CD4-positive, alpha-beta memory T cell (primary cell): ENCODE measurements at regions of chr3 and their contacts with region 1.

Region 1: DNA sequence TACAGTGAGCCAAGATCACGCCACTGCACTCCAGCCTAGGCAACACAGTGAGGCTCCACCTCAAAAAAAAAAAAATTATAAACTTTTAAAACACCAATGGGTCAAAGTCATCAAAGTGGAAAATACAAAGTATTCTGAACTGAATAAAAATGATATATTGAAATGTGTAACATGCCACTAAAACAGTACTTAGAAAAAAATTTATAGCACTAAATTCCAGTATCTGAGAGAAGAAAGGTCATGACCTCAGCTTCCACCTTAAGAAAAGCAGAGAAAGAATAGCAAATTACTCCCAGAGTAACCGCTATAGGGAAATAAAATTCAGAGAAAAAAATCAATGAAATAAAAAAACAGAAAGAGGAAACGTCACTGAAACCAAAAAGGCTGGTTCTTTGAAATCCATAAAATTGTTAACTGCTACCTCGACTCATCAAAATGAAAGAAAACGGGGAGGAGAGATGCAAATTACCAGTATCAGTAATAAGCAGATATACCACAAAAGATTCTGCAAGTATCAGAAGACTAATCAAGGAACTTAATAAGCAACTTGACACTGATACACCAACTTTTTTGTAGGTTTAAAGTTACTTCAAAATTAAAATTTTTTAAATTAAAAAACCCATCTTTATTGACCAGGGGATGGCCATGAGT is 20.8 kb downstream of the ATP13A3 start:
- DNase-seq: no peak
- H3K4me3 ChIP-seq: no peak overlapping the region
- H3K4me3 Mint-ChIP-seq: peak overlapping the region in 4 of 8 donors; percentile 28 to 62 (median 41)
- H3K27ac ChIP-seq: no peak overlapping the region
- H3K27ac Mint-ChIP-seq: peak overlapping the region in 1 of 7 donors; percentile 22
- H3K4me1 ChIP-seq: peaks cover 15% of the 10 kb centered on the region
- H3K4me1 Mint-ChIP-seq: peaks cover 8 to 23% (median 13%) of the 10 kb centered on the region in 4 donors
- H3K27me3 ChIP-seq: no peaks in the 10 kb centered on the region
- H3K27me3 Mint-ChIP-seq: no peaks in the 10 kb centered on the region

Region 2: GRCh38 chr3:194344012-194344411 is 122.0 kb before region 1 on chr3:
- CTCF ChIA-PET with region 1: no interaction called
- POLR2A ChIA-PET with region 1: no interaction called
- intact Hi-C with region 1: no loop called
- DNase-seq: peak; percentile 56 to 63 (median 59)
- H3K4me3 ChIP-seq: no peak overlapping the region
- H3K4me3 Mint-ChIP-seq: peak overlapping the region in 1 of 8 donors; percentile 48
- H3K27ac ChIP-seq: no peak overlapping the region
- H3K27ac Mint-ChIP-seq: no peak overlapping the region
- H3K4me1 ChIP-seq: no peaks in the 10 kb centered on the region
- H3K4me1 Mint-ChIP-seq: no peaks in the 10 kb centered on the region
- H3K27me3 ChIP-seq: no peaks in the 10 kb centered on the region
- H3K27me3 Mint-ChIP-seq: peaks cover 1 to 7% of the 10 kb centered on the region in 2 donors

Region 3: GRCh38 chr3:194573691-194574437 is 107.8 kb after region 1 on chr3:
- CTCF ChIA-PET with region 1: interaction called, 133 read pairs
- POLR2A ChIA-PET with region 1: no interaction called
- intact Hi-C with region 1: no loop called
- DNase-seq: peak in 4 of 5 donors; percentile 15 to 38 (median 32)
- H3K4me3 ChIP-seq: no peak overlapping the region
- H3K4me3 Mint-ChIP-seq: no peak overlapping the region
- H3K27ac ChIP-seq: no peak overlapping the region
- H3K27ac Mint-ChIP-seq: peak overlapping the region in 1 of 7 donors; percentile 58
- H3K4me1 ChIP-seq: no peaks in the 10 kb centered on the region
- H3K4me1 Mint-ChIP-seq: no peaks in the 10 kb centered on the region
- H3K27me3 ChIP-seq: no peaks in the 10 kb centered on the region
- H3K27me3 Mint-ChIP-seq: peaks cover 18 to 35% of the 10 kb centered on the region in 2 donors